CD4-positive, alpha-beta T cell (primary cell): ENCODE measurements at regions of chr6 and their contacts with region 1.

Region 1: DNA sequence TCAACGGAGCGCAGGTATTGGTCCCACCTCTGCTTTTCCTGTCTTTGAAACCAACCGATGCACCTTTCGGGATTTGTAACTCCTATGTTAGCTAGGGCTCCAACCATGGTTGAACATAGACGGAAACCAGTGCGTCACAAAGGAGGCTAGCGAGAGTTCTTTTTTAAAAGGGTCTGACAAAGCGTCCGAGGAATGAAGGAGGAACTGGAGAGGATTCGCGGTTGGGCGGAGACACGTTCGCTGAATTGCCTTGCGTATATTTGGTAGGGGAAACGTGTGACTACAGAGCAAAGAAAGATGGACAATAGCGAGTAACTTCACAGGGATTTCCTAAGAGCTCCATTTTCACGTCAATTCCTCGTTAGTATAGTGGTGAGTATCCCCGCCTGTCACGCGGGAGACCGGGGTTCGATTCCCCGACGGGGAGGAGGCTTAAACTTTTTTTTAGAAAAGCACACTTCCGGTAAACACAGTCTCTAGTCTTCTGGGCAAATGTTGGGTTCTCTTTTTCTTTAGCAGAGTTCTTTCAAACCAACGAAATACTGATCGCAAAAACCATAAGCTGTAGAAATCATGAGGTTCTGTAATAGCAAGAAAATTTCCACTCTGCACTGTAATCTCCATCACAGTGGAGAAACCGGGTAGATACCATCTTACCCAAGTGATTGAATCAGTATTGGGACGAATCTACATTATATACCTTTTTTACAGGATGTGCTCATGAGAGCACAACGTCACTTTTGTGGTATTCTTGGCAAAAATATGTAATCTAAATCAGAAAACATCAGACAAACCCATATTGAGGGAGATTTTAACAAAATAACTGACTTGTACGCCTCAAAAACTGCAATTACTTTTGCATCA is 6.6 kb upstream of the ZNF184 start:
- DNase-seq: peak; percentile 82 to 94 (median 90)
- ATAC-seq: peak; percentile 71
- H3K4me3 ChIP-seq: peak overlapping the region; percentile 62
- H3K4me3 Mint-ChIP-seq: no peak overlapping the region
- H3K27ac ChIP-seq: peak overlapping the region; percentile 93 to 94
- H3K27ac Mint-ChIP-seq: no peak overlapping the region
- H3K4me1 ChIP-seq: peaks cover 16% of the 10 kb centered on the region
- H3K4me1 Mint-ChIP-seq: peaks cover 3% of the 10 kb centered on the region
- H3K27me3 ChIP-seq: no peaks in the 10 kb centered on the region
- H3K27me3 Mint-ChIP-seq: no peaks in the 10 kb centered on the region
- CTCF ChIP-seq: no peak

Region 2: DNA sequence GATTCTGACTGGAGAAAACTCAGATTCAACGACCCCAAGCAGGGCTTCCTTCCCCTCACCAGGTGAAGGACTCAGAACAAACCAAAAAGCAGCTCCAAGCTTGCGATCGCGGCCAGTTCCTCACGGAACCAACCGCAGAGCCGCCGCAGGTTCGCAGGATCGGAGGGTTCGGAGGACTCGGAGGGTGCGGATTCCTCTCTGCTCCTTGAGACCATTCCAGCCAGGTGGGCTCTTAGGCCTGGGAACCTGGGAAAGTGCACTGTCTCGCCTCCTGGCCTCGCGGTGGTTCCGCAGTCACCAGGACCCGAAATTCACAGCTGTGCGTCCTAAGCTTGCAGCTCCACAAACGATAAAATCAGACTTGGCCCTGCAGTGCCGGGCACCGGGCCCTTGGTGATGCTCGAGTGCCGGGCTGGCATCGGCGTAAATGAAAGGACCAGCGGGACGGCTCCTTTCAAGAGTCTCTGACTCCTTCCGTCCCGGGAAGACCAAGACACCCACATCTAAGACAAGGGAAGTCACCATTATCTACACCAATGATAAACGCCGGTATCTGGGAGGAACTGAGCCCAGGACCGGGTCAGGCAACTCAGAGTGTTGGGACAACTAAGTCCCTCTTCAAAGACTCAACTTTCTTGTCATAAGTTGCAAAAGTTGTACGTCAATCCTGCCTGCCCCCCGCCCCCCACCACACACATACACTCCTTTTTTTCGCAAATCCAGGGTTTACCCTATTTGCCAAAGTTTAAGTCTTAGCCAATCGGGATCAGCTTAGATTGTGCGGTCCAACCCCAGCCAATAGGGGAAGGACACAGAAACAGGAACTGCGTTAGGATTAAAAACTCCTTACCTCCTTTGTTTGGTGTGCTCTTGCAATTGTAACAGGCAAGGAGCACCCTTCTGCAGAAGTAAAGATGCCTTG is 301.8 kb before region 1 on chr6:
- CTCF ChIA-PET with region 1: interaction called, 3 read pairs
- POLR2A ChIA-PET with region 1: interaction called, 35 read pairs
- intact Hi-C with region 1: loop called (anchors 5 kb)
- DNase-seq: peak; percentile 44 to 90 (median 64)
- ATAC-seq: peak; percentile 64
- H3K4me3 ChIP-seq: peak overlapping the region; percentile 89
- H3K4me3 Mint-ChIP-seq: peak overlapping the region; percentile 99
- H3K27ac ChIP-seq: peak overlapping the region; percentile 27 to 63
- H3K27ac Mint-ChIP-seq: peak overlapping the region; percentile 100
- H3K4me1 ChIP-seq: peaks cover 21% of the 10 kb centered on the region
- H3K4me1 Mint-ChIP-seq: peaks cover 24% of the 10 kb centered on the region
- H3K27me3 ChIP-seq: no peaks in the 10 kb centered on the region
- H3K27me3 Mint-ChIP-seq: peaks cover 24% of the 10 kb centered on the region
- CTCF ChIP-seq: peak; percentile 54

Region 3: DNA sequence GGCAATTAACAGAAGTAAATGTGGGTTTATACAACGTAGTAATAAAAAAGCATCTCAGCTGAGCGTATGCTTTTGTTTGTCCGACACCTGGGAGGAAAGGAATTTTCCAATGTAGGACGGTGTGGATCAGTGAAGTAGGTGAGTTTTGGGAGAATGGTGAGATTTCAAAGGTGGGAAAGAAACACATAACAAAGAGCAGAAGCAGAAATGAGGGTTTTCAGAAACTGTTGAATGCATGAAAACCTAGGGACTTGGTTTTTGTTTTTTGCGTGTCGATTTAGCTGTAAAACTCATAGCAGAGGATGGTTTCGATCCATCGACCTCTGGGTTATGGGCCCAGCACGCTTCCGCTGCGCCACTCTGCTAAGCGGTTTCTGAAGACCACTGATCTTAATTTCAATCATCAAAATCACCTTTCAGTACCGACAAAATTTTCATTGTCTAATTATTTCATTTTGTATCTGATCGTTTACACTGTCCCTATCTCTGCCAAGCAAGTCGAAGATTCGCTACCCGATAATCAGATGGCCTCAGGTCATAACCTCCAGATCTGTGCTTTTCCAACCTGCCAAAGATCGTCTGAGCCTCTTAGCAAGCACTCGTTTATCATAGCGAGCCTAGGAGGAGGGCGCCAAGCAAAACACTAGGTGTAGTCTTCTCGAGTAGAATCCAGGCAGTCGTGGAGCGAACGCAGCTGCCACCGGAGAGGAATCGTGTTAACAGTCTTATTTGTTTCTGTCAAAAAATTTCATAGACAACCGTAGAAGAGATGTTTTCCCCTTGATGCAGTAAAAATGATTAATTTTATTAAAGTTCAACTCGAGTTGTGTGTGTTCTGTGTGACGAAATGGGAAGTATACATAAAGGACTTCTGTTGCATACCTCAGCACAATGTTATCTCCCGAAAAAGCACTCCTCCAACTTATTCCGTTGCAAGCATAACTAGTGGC is 146.6 kb before region 1 on chr6:
- CTCF ChIA-PET with region 1: no interaction called
- POLR2A ChIA-PET with region 1: interaction called, 10 read pairs
- intact Hi-C with region 1: loop called in 1 of 2 experiments (anchors 2 kb)
- DNase-seq: peak in 13 of 14 experiments; percentile 8 to 75 (median 39)
- ATAC-seq: peak; percentile 88
- H3K4me3 ChIP-seq: peak overlapping the region; percentile 51
- H3K4me3 Mint-ChIP-seq: peak overlapping the region; percentile 92
- H3K27ac ChIP-seq: no peak overlapping the region
- H3K27ac Mint-ChIP-seq: peak overlapping the region; percentile 91
- H3K4me1 ChIP-seq: peaks cover 7% of the 10 kb centered on the region
- H3K4me1 Mint-ChIP-seq: peaks cover 21% of the 10 kb centered on the region
- H3K27me3 ChIP-seq: peaks cover 2 to 44% of the 10 kb centered on the region in 2 experiments
- H3K27me3 Mint-ChIP-seq: peaks cover 58% of the 10 kb centered on the region
- CTCF ChIP-seq: no peak

Region 4: DNA sequence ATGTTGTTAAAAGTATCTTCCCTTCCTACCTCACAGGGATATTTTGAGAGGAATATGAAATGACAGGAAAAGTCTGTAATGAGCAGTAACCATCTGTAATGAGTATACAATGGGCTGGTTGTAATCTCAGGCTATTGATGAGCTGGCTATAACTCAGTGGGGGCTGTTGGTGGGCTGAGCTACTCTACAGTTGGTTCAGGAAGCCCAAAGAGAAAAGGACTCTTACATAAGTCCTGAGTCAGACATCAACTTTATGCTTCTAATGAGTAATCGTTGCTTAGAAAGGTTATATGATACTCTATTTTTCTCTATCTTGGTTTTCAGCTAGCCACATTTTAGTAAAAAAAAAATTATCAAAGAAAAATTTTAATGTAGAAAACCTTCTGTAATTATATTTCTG is 64.6 kb before region 1 on chr6:
- CTCF ChIA-PET with region 1: no interaction called
- POLR2A ChIA-PET with region 1: no interaction called
- intact Hi-C with region 1: no loop called
- DNase-seq: no peak
- ATAC-seq: no peak
- H3K4me3 ChIP-seq: no peak overlapping the region
- H3K4me3 Mint-ChIP-seq: no peak overlapping the region
- H3K27ac ChIP-seq: no peak overlapping the region
- H3K27ac Mint-ChIP-seq: no peak overlapping the region
- H3K4me1 ChIP-seq: no peaks in the 10 kb centered on the region
- H3K4me1 Mint-ChIP-seq: no peaks in the 10 kb centered on the region
- H3K27me3 ChIP-seq: peaks cover 3 to 6% of the 10 kb centered on the region in 2 experiments
- H3K27me3 Mint-ChIP-seq: peaks cover 18% of the 10 kb centered on the region
- CTCF ChIP-seq: no peak

Region 5: DNA sequence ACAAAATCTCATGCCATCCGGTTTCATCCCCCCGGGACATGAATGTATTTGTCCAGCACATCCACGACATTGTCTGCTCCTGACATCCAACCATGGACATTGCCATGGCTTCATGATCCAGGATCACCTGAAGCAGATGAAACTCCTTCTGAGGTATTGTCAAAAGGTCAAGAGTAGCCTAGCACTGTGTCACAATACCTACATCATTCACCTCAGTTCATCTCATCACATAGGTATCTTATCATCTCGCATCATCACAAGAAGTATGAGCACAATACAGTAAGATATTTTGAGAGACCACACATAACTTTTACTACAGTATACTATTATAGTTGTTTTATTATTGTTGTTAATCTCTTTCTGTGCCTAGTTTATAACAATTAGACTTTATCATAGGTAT is 40.2 kb before region 1 on chr6:
- CTCF ChIA-PET with region 1: no interaction called
- POLR2A ChIA-PET with region 1: no interaction called
- intact Hi-C with region 1: no loop called
- DNase-seq: no peak
- ATAC-seq: no peak
- H3K4me3 ChIP-seq: no peak overlapping the region
- H3K4me3 Mint-ChIP-seq: no peak overlapping the region
- H3K27ac ChIP-seq: no peak overlapping the region
- H3K27ac Mint-ChIP-seq: no peak overlapping the region
- H3K4me1 ChIP-seq: no peaks in the 10 kb centered on the region
- H3K4me1 Mint-ChIP-seq: no peaks in the 10 kb centered on the region
- H3K27me3 ChIP-seq: no peaks in the 10 kb centered on the region
- H3K27me3 Mint-ChIP-seq: no peaks in the 10 kb centered on the region
- CTCF ChIP-seq: no peak

Region 6: DNA sequence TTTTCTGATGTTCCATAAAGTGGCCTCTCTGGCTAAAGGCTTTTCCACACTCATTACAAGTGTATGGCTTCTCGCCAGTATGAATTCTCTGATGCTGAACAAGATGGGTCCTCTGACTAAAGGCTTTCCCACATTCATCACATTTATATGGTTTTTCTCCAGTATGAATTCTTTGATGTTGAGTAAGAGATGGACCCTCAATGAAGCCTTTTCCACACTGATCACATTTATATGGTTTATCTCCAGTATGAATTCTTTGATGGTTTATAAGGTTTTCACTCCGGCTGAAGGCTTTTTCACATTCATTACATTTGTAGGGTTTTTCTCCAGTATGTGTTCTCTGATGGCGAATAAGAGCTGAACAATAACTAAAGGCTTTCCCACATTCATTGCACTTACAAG is 27.1 kb before region 1 on chr6:
- CTCF ChIA-PET with region 1: no interaction called
- POLR2A ChIA-PET with region 1: no interaction called
- intact Hi-C with region 1: no loop called
- DNase-seq: no peak
- ATAC-seq: no peak
- H3K4me3 ChIP-seq: no peak overlapping the region
- H3K4me3 Mint-ChIP-seq: no peak overlapping the region
- H3K27ac ChIP-seq: no peak overlapping the region
- H3K27ac Mint-ChIP-seq: no peak overlapping the region
- H3K4me1 ChIP-seq: no peaks in the 10 kb centered on the region
- H3K4me1 Mint-ChIP-seq: no peaks in the 10 kb centered on the region
- H3K27me3 ChIP-seq: no peaks in the 10 kb centered on the region
- H3K27me3 Mint-ChIP-seq: no peaks in the 10 kb centered on the region
- CTCF ChIP-seq: no peak

Region 7: GRCh38 chr6:27503436-27504030 is 24.0 kb after region 1 on chr6:
- CTCF ChIA-PET with region 1: interaction called, 8 read pairs
- POLR2A ChIA-PET with region 1: interaction called, 43 read pairs
- intact Hi-C with region 1: loop called (anchors 1 to 2 kb)
- DNase-seq: peak; percentile 59 to 89 (median 75)
- ATAC-seq: peak; percentile 58
- H3K4me3 ChIP-seq: peak overlapping the region; percentile 62
- H3K4me3 Mint-ChIP-seq: peak overlapping the region; percentile 95
- H3K27ac ChIP-seq: peak overlapping the region; percentile 2 to 33
- H3K27ac Mint-ChIP-seq: peak overlapping the region; percentile 94
- H3K4me1 ChIP-seq: peaks cover 15% of the 10 kb centered on the region
- H3K4me1 Mint-ChIP-seq: peaks cover 46% of the 10 kb centered on the region
- H3K27me3 ChIP-seq: peaks cover 0 to 11% of the 10 kb centered on the region in 2 experiments
- H3K27me3 Mint-ChIP-seq: peaks cover 40% of the 10 kb centered on the region
- CTCF ChIP-seq: no peak

Region 8: DNA sequence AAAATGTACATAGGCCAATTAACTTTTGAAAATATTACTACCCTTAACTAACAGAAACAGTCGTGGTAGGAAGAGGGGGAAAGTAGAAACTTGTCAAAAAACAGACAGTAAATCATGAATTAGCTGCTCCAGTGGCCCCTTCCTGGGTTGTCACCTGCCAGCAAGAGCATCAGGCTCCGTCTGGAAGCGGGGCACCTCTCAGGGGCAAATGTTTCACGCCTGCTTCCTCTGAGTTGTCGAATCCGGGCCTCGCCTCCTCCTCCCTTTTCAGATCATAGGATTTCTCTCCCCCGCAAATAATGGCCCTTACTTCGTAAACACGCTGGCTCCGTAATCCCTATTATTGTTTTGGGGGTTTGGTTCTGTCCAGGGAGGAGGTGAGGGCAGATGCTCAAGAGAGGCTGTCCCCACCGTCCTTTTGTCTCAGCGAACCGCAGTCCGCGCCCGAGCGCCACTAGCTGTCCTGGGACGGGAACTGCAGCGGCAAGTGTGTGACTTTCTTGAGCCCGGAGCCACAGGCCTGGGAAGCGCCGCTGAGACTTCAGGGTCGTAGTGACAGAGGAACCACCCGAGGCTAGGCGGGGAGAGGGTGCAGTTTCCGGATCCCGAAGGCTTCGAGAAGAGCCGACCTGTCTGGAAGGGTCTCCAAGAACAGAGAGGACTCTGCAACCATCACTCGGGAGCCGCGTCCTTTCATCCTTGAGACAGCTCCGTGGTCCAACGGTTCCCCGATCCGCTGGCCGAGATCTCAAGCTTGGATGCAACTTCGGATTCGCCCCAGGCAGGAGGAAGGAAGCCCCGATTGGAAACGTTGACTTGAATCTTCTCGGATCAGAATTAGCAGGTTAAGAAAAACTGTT is 207.8 kb after region 1 on chr6:
- CTCF ChIA-PET with region 1: interaction called, 4 read pairs
- POLR2A ChIA-PET with region 1: interaction called, 15 read pairs
- intact Hi-C with region 1: loop called in 1 of 2 experiments (anchors 5 kb)
- DNase-seq: peak; percentile 53 to 87 (median 68)
- ATAC-seq: peak; percentile 74
- H3K4me3 ChIP-seq: peak overlapping the region; percentile 88
- H3K4me3 Mint-ChIP-seq: peak overlapping the region; percentile 95
- H3K27ac ChIP-seq: peak overlapping the region in 1 of 2 donors; percentile 37
- H3K27ac Mint-ChIP-seq: peak overlapping the region; percentile 97
- H3K4me1 ChIP-seq: peaks cover 14% of the 10 kb centered on the region
- H3K4me1 Mint-ChIP-seq: peaks cover 38% of the 10 kb centered on the region
- H3K27me3 ChIP-seq: peaks cover 5 to 9% of the 10 kb centered on the region in 2 experiments
- H3K27me3 Mint-ChIP-seq: peaks cover 40% of the 10 kb centered on the region
- CTCF ChIP-seq: peak; percentile 66

Region 9: GRCh38 chr6:27864906-27865849 is 385.6 kb after region 1 on chr6:
- CTCF ChIA-PET with region 1: no interaction called
- POLR2A ChIA-PET with region 1: interaction called, 22 read pairs
- intact Hi-C with region 1: no loop called
- DNase-seq: peak in 13 of 14 experiments; percentile 35 to 97 (median 61)
- ATAC-seq: peak; percentile 83
- H3K4me3 ChIP-seq: peak overlapping the region; percentile 59
- H3K4me3 Mint-ChIP-seq: peak overlapping the region; percentile 100
- H3K27ac ChIP-seq: peak overlapping the region; percentile 54 to 78
- H3K27ac Mint-ChIP-seq: peak overlapping the region; percentile 93
- H3K4me1 ChIP-seq: peaks cover 38% of the 10 kb centered on the region
- H3K4me1 Mint-ChIP-seq: peaks cover 41% of the 10 kb centered on the region
- H3K27me3 ChIP-seq: no peaks in the 10 kb centered on the region
- H3K27me3 Mint-ChIP-seq: peaks cover 3% of the 10 kb centered on the region
- CTCF ChIP-seq: no peak